Activated CD8-positive, alpha-beta T cell treated with anti-CD3 and anti-CD28 coated beads, Interleukin-2, amount 10 ng/mL, durations not matched to agents 7 days and 5 days (primary cell): ENCODE measurements at regions of chr17 and their contacts with region 1.

Region 1: DNA sequence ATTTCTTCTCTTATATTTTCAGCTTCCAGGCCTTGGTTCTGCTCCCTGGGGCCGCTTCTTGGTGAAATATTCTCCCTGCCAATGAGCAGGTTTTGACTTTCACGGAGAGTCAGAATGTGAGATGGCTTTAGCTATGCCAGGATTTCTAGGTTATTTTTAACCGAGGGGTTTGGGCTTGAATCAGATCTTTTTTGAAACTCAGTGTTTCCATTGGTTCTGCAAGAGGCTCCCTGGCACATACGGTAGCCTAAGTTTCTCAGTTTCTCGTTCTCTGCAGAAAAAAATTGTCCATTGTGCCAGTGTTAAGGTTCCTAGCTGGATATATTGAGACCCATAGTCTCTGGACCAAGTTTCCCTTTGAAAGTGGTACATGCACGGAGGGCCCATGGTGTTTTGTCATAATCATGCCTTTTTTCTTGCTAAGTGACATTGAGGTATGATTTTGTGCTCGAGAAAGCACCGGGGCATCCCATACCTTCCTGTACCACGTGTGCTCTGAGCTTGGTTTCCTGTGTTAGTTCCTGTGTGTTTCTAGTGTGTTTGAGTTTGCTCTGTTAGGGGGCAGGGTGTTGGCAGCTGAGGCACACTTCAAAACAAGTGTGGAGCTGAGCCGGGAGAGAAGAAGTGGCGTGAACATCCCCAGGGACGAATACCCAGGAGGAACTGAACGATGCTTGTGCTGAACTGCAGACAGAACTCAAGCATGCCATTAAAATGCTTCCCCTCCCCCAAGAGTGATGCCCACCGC is 127.2 kb downstream of the HS3ST3B1 start:
- DNase-seq: peak; percentile 75
- ATAC-seq: peak; percentile 99
- H3K4me3 Mint-ChIP-seq: peak overlapping the region; percentile 65
- H3K27ac Mint-ChIP-seq: peak overlapping the region; percentile 97
- H3K4me1 Mint-ChIP-seq: peaks cover 46% of the 10 kb centered on the region
- H3K27me3 Mint-ChIP-seq: no peaks in the 10 kb centered on the region

Region 2: DNA sequence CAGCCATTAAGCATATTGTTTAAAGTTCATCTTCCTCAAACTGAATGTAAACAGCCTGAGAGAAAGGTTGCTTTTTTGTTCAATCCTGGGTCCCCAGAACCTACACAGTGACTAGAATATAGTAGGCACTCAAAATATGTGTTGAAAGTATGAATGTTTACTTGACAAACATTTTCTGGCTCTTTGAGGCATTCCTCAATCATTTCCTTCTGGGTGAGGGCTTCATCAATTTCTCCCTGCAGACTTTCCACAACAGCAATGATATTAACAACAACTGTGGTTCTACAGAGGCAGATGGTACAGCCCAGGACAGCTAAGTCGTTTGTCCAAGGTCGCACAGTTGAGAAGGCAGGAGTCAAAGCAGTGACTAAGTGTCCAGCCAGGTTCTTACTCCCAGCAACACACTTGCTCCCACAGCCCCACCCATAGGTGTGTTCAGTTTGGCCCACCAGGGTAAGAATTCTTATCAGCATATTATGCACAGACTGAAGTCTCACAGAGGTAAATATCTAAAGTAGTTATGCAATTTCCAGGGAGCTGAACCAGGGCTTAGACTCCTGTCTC is 66.0 kb before region 1 on chr17:
- CTCF ChIA-PET with region 1: no interaction called
- POLR2A ChIA-PET with region 1: no interaction called
- DNase-seq: no peak
- ATAC-seq: no peak
- H3K4me3 Mint-ChIP-seq: no peak overlapping the region
- H3K27ac Mint-ChIP-seq: no peak overlapping the region
- H3K4me1 Mint-ChIP-seq: peaks cover 13% of the 10 kb centered on the region
- H3K27me3 Mint-ChIP-seq: no peaks in the 10 kb centered on the region

Region 3: GRCh38 chr17:14405189-14405588 is 22.9 kb before region 1 on chr17:
- CTCF ChIA-PET with region 1: interaction called, 26 read pairs
- POLR2A ChIA-PET with region 1: interaction called, 6 read pairs
- DNase-seq: no peak
- ATAC-seq: no peak
- H3K4me3 Mint-ChIP-seq: no peak overlapping the region
- H3K27ac Mint-ChIP-seq: peak overlapping the region; percentile 32
- H3K4me1 Mint-ChIP-seq: peaks cover 31% of the 10 kb centered on the region
- H3K27me3 Mint-ChIP-seq: peaks cover 2% of the 10 kb centered on the region

Region 4: GRCh38 chr17:14514983-14515382 is 86.9 kb after region 1 on chr17:
- CTCF ChIA-PET with region 1: no interaction called
- POLR2A ChIA-PET with region 1: no interaction called
- DNase-seq: no peak
- ATAC-seq: no peak
- H3K4me3 Mint-ChIP-seq: no peak overlapping the region
- H3K27ac Mint-ChIP-seq: no peak overlapping the region
- H3K4me1 Mint-ChIP-seq: no peaks in the 10 kb centered on the region
- H3K27me3 Mint-ChIP-seq: no peaks in the 10 kb centered on the region